ENCODE measurements at regions of chr19 and their contacts with region 1.

Region 1: GRCh38 chr19:54606891-54607796 is 13.7 kb downstream of the LILRA1 start:
- DNase-seq: no peak
- H3K27ac ChIP-seq: no peak overlapping the region
- CTCF ChIP-seq: no peak

Region 2: DNA sequence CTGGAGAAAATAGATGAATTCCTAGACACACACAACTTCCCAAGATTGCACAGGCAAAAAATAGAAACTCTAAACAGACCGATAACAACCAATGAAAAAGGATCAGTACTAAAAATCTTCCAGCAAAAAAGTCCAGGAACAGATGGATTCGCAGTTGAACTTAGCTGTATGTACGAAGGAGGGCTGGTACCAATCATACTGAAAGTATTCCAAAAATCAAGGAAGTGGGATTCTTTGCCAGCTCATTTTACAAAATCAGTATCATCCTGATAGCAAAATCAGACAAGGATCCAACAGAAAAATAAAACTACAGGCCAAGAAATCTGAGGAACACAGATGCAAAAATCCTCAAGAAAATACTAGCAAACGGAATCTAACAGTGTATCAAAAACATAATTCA is 319.7 kb before region 1 on chr19:
- CTCF ChIA-PET with region 1: no interaction called
- POLR2A ChIA-PET with region 1: interaction called, 15 read pairs
- DNase-seq: no peak
- H3K27ac ChIP-seq: no peak overlapping the region
- CTCF ChIP-seq: no peak

Region 3: GRCh38 chr19:54551950-54552912 is 54.9 kb before region 1 on chr19:
- CTCF ChIA-PET with region 1: no interaction called
- POLR2A ChIA-PET with region 1: no interaction called
- DNase-seq: no peak
- H3K27ac ChIP-seq: no peak overlapping the region
- CTCF ChIP-seq: no peak

Region 4: GRCh38 chr19:54573330-54573872 is 33.7 kb before region 1 on chr19 and contains the start of gene LILRA2:
- CTCF ChIA-PET with region 1: no interaction called
- POLR2A ChIA-PET with region 1: no interaction called
- DNase-seq: no peak
- H3K27ac ChIP-seq: no peak within 1 kb of the TSS
- CTCF ChIP-seq: no peak

Region 5: DNA sequence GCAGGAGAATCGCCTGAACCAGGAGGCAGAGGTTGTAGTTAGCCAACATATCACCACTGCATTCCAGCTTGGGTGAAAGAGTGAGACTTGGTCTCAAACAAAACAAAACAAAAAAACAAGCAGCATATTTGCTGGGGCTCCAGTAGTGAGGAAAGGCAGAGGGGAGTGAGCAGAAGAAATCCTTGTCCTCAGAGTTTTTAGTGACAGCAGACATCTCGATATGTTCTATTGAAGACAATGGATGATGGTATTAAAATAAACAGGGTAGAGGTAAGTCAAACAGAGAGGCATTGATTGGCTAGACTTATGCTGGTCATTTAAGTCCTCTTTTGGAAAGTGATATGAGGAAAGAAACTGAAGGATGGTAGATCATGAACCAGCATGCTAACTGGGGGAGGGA is 321.2 kb after region 1 on chr19:
- CTCF ChIA-PET with region 1: no interaction called
- POLR2A ChIA-PET with region 1: no interaction called
- DNase-seq: no peak
- H3K27ac ChIP-seq: no peak overlapping the region
- CTCF ChIP-seq: no peak

Measured in RWPE1 (cell line).